IMR-90 (cell line): ENCODE measurements at regions of chr2 and their contacts with region 1.

Region 1: GRCh38 chr2:96951093-96951654 is 35.2 kb downstream of the FAM178B start:
- DNase-seq: peak; percentile 41
- ATAC-seq: peak; percentile 80
- H3K4me3 ChIP-seq: no peak overlapping the region
- H3K27ac ChIP-seq: no peak overlapping the region
- H3K4me1 ChIP-seq: peaks cover 11% of the 10 kb centered on the region
- H3K27me3 ChIP-seq: peaks cover 21% of the 10 kb centered on the region; the same call in 1 of the 2 replicates
- CTCF ChIP-seq: peak; percentile 72
- POLR2A ChIP-seq: no peak
- RAD21 ChIP-seq: peak; percentile 78

Region 2: GRCh38 chr2:96730212-96730611 is 221.0 kb before region 1 on chr2:
- CTCF ChIA-PET with region 1: no interaction called
- POLR2A ChIA-PET with region 1: no interaction called
- dilution Hi-C with region 1: no loop called
- in situ Hi-C with region 1: no loop called
- intact Hi-C with region 1: no loop called
- DNase-seq: peak; percentile 56
- ATAC-seq: peak; percentile 65
- H3K4me3 ChIP-seq: no peak overlapping the region
- H3K27ac ChIP-seq: no peak overlapping the region
- H3K4me1 ChIP-seq: peaks cover 2% of the 10 kb centered on the region; the same call in 1 of the 2 replicates
- H3K27me3 ChIP-seq: no peaks in the 10 kb centered on the region
- CTCF ChIP-seq: no peak
- POLR2A ChIP-seq: no peak
- RAD21 ChIP-seq: no peak

Region 3: DNA sequence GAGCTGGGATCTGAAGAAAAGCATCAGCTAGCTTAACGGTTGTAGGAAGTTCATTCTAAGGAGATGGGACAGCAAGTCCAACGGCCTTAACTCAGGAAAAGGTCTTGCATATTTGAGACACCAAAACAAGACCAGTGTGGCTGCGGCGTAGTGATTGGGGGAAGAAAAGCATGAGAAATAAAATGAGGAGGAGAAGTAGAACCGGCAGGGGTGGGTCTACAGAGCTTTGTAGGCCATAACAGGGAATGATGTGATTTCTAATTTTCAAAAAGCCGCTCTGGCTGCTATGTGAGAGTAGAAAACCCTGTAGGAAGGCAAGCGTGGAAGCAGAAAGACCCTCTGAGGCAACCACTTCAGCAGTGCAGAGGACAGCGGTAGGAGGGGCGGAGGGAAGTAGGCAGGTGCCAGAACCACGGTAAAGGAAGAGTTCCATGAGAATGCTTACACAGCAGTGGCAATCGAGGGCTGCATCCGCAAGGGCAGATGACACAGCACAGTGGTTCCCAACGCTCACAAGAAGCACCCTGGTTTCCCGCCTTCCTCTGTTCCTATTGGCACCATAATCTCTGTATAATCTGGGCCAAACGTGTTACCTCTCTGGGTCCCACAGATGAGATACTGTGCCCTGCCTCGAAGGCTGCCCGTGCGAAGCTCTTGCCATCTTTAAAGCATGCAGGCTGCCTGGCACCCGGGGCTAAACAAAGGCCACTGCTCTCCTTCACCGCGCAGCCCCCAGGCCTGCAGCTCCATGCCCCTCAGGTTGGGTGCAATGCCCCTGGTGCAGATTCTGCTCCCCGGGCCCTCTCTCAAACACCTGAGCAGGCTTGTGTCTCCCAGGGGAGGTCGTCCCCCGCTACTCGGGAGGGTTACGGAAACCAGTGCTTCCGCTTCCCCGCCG is 94.1 kb before region 1 on chr2:
- CTCF ChIA-PET with region 1: interaction called, 23 read pairs
- POLR2A ChIA-PET with region 1: interaction called, 3 read pairs
- dilution Hi-C with region 1: no loop called
- in situ Hi-C with region 1: loop called (anchors 5 kb)
- intact Hi-C with region 1: loop called (anchors 1 kb)
- DNase-seq: no peak
- ATAC-seq: no peak; the same call in 1 of the 2 replicates
- H3K4me3 ChIP-seq: peak overlapping the region; percentile 60
- H3K27ac ChIP-seq: peak overlapping the region; percentile 58; the same call in 1 of the 2 replicates
- H3K4me1 ChIP-seq: peaks cover 12% of the 10 kb centered on the region
- H3K27me3 ChIP-seq: no peaks in the 10 kb centered on the region
- CTCF ChIP-seq: no peak
- POLR2A ChIP-seq: no peak
- RAD21 ChIP-seq: no peak

Region 4: GRCh38 chr2:97654791-97655190 is 703.6 kb after region 1 on chr2:
- CTCF ChIA-PET with region 1: no interaction called
- POLR2A ChIA-PET with region 1: no interaction called
- dilution Hi-C with region 1: no loop called
- in situ Hi-C with region 1: no loop called
- intact Hi-C with region 1: no loop called
- DNase-seq: no peak
- ATAC-seq: no peak
- H3K4me3 ChIP-seq: no peak overlapping the region
- H3K27ac ChIP-seq: no peak overlapping the region
- H3K4me1 ChIP-seq: no peaks in the 10 kb centered on the region; the same call in 1 of the 2 replicates
- H3K27me3 ChIP-seq: no peaks in the 10 kb centered on the region
- CTCF ChIP-seq: no peak
- POLR2A ChIP-seq: no peak
- RAD21 ChIP-seq: no peak